ENCODE measurements at regions of chr2 and their contacts with region 1.

Region 1: GRCh38 chr2:41621563-41621962 is 426.3 kb upstream of the PKDCC start:
- DNase-seq: no peak
- H3K4me3 ChIP-seq: no peak overlapping the region
- CTCF ChIP-seq: no peak
- POLR2A ChIP-seq: no peak

Region 2: DNA sequence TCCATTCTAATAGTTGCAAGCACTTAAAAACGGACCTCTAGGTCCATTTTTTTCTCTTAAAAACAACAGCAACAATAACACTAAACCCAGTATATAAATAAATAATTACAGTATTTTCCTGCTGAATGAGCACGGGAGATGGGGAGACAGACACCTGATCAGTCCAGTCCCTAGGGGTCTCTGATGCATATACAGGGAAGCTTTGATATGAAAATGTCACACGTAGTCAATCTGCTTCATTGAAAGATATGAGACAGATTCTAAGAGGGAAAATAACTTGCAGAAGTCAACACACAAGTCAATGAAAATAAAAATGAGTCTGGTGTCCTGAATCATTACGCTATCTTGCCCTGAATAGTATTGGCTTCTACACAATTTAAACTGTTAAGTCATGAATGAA is 646.4 kb before region 1 on chr2:
- intact Hi-C with region 1: loop called (anchors 10 kb)
- DNase-seq: no peak
- H3K4me3 ChIP-seq: no peak overlapping the region
- CTCF ChIP-seq: no peak
- POLR2A ChIP-seq: no peak

Region 3: GRCh38 chr2:41736105-41736567 is 114.6 kb after region 1 on chr2:
- intact Hi-C with region 1: no loop called
- DNase-seq: no peak
- H3K4me3 ChIP-seq: no peak overlapping the region
- CTCF ChIP-seq: no peak
- POLR2A ChIP-seq: no peak

Region 4: GRCh38 chr2:41933585-41934320 is 312.2 kb after region 1 on chr2:
- intact Hi-C with region 1: no loop called
- DNase-seq: peak; percentile 43 to 68
- H3K4me3 ChIP-seq: no peak overlapping the region
- CTCF ChIP-seq: no peak
- POLR2A ChIP-seq: no peak

Measured in lower leg skin (tissue), 4 donors.